Activated CD4-positive, alpha-beta memory T cell treated with anti-CD3 and anti-CD28 coated beads for 36 hours (primary cell): ENCODE measurements at regions of chr1 and their contacts with region 1.

Region 1: DNA sequence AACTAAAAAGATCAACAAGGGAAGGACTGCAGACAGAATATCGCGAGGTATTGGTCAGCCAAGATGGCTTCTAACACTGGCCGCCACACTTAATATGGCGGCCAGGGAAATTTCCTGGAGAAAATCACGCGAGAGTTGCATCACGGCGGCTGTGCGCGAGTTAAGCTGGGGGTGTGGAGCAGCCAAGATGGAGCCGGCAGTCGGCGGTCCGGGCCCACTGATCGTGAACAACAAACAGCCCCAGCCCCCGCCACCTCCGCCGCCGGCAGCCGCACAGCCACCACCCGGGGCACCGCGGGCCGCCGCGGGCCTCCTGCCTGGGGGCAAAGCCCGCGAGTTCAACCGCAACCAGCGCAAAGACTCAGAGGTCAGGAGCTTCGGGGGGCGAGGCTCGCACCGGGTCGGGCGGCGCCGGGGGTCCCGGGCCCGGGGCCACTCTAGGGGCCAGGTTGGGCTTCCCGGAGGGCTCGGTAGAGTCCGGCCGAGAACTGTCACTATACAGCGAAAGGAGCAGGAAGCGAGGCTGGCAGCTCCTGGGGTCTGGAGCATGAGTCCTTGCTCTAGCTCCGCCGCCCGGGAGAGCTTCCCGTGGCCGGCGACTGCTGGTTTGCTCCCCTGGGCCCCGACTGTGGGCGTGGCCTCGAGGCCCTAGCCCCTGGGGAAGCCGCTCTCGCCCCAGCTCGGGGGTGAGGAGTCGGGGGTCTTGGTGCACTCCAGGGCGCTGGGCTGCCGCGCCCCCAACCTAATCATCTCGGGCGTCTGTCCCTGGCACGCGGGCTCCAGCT is at the start of gene STRIP1:
- DNase-seq: peak; percentile 95
- H3K4me3 Mint-ChIP-seq: peak within 1 kb of the TSS; percentile 82
- H3K27ac Mint-ChIP-seq: peak within 1 kb of the TSS; percentile 92
- H3K4me1 Mint-ChIP-seq: peaks cover 59% of the 10 kb centered on the region
- H3K27me3 Mint-ChIP-seq: no peaks in the 10 kb centered on the region
- total RNA-seq, gene STRIP1: 22.7 to 25.7 TPM

Region 2: DNA sequence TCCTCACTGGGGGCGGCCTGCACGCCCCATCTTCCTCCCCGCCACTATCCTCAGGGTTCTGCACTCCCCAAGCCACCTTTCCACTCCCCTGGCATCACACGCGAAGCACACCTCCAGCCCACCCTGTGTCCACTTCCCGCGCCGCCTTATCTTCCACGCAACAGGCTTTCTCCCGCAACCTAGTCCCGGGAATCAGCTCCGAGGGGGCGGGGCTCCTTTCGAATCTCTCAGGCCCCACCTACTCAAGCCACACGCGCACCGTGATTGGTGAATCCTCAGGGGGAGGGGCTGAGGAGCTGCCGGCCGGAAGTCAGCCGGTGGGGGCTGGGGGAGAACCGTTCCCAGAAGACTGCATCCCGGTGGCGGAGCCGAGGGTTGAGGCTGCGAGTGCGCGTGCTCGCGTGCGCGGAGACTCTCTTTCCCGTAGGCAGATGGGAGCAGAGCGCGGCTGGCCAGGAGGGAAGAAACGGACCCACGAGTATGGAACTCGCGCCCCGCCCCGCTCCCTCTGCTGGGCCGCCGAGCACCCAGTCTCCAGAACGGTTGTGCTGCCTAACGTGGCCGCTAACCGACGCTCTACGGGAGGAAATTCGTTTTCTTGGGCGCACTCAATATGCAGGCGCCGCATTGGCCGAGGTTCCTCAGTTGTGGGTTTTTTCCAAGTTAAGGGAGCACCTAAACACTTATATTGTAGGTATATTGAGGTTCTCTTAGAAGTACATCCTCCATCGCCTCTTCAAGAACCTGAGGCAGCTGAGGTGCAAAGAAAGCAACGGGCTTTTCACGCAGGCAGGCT is 751.5 kb before region 1 on chr1 and contains the start of gene PSRC1:
- CTCF ChIA-PET with region 1: no interaction called
- POLR2A ChIA-PET with region 1: no interaction called
- intact Hi-C with region 1: loop called (anchors 1 kb)
- DNase-seq: peak; percentile 94
- H3K4me3 Mint-ChIP-seq: peak within 1 kb of the TSS; percentile 95
- H3K27ac Mint-ChIP-seq: peak within 1 kb of the TSS; percentile 89
- H3K4me1 Mint-ChIP-seq: peaks cover 12% of the 10 kb centered on the region
- H3K27me3 Mint-ChIP-seq: no peaks in the 10 kb centered on the region
- total RNA-seq, gene PSRC1: 14.9 to 16.3 TPM

Region 3: GRCh38 chr1:109773146-109773899 is 261.3 kb before region 1 on chr1:
- CTCF ChIA-PET with region 1: interaction called, 13 read pairs
- POLR2A ChIA-PET with region 1: no interaction called
- intact Hi-C with region 1: no loop called
- DNase-seq: peak; percentile 83
- H3K4me3 Mint-ChIP-seq: no peak overlapping the region
- H3K27ac Mint-ChIP-seq: no peak overlapping the region
- H3K4me1 Mint-ChIP-seq: peaks cover 4% of the 10 kb centered on the region
- H3K27me3 Mint-ChIP-seq: no peaks in the 10 kb centered on the region

Region 4: DNA sequence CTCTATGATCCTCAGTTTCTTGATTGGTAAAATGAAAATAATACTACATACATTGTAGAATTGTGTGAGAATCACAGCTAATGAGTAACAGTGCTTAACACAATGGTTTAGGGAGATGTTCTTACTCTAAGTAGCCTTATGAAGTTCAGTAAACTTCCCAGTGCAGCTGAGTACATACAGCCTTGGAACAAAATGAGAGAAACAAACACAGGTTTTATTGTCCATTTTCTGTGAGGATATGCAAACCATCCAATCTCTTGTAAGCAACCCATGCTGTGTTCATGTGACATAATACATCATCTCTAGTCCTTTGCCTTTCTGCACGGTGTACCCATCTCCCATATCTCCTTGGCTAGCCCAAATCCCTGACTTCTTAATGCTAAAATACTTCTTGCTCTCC is 14.9 kb before region 1 on chr1:
- CTCF ChIA-PET with region 1: interaction called, 31 read pairs
- POLR2A ChIA-PET with region 1: interaction called, 7 read pairs
- intact Hi-C with region 1: no loop called
- DNase-seq: no peak
- H3K4me3 Mint-ChIP-seq: no peak overlapping the region
- H3K27ac Mint-ChIP-seq: no peak overlapping the region
- H3K4me1 Mint-ChIP-seq: no peaks in the 10 kb centered on the region
- H3K27me3 Mint-ChIP-seq: no peaks in the 10 kb centered on the region

Region 5: GRCh38 chr1:110060034-110060661 is 25.5 kb after region 1 on chr1:
- CTCF ChIA-PET with region 1: interaction called, 186 read pairs
- POLR2A ChIA-PET with region 1: interaction called, 3 read pairs
- intact Hi-C with region 1: loop called (anchors 1 kb)
- DNase-seq: peak; percentile 85
- H3K4me3 Mint-ChIP-seq: no peak overlapping the region
- H3K27ac Mint-ChIP-seq: no peak overlapping the region
- H3K4me1 Mint-ChIP-seq: no peaks in the 10 kb centered on the region
- H3K27me3 Mint-ChIP-seq: no peaks in the 10 kb centered on the region

Region 6: GRCh38 chr1:110106013-110106941 is 71.6 kb after region 1 on chr1:
- CTCF ChIA-PET with region 1: interaction called, 40 read pairs
- POLR2A ChIA-PET with region 1: interaction called, 3 read pairs
- intact Hi-C with region 1: loop called (anchors 5 kb)
- DNase-seq: peak; percentile 77
- H3K4me3 Mint-ChIP-seq: no peak overlapping the region
- H3K27ac Mint-ChIP-seq: no peak overlapping the region
- H3K4me1 Mint-ChIP-seq: no peaks in the 10 kb centered on the region
- H3K27me3 Mint-ChIP-seq: no peaks in the 10 kb centered on the region